Activated naive CD4-positive, alpha-beta T cell treated with anti-CD3 and anti-CD28 coated beads for 36 hours (primary cell): ENCODE measurements at regions of chr7 and their contacts with region 1.

Region 1: GRCh38 chr7:123748734-123749536 is at the start of gene WASL:
- DNase-seq: peak; percentile 89
- H3K4me3 Mint-ChIP-seq: peak within 1 kb of the TSS; percentile 95
- H3K27ac Mint-ChIP-seq: peak within 1 kb of the TSS; percentile 95
- H3K4me1 Mint-ChIP-seq: peaks cover 46% of the 10 kb centered on the region
- H3K27me3 Mint-ChIP-seq: no peaks in the 10 kb centered on the region
- total RNA-seq, gene WASL: 3.7 to 3.8 TPM

Region 2: DNA sequence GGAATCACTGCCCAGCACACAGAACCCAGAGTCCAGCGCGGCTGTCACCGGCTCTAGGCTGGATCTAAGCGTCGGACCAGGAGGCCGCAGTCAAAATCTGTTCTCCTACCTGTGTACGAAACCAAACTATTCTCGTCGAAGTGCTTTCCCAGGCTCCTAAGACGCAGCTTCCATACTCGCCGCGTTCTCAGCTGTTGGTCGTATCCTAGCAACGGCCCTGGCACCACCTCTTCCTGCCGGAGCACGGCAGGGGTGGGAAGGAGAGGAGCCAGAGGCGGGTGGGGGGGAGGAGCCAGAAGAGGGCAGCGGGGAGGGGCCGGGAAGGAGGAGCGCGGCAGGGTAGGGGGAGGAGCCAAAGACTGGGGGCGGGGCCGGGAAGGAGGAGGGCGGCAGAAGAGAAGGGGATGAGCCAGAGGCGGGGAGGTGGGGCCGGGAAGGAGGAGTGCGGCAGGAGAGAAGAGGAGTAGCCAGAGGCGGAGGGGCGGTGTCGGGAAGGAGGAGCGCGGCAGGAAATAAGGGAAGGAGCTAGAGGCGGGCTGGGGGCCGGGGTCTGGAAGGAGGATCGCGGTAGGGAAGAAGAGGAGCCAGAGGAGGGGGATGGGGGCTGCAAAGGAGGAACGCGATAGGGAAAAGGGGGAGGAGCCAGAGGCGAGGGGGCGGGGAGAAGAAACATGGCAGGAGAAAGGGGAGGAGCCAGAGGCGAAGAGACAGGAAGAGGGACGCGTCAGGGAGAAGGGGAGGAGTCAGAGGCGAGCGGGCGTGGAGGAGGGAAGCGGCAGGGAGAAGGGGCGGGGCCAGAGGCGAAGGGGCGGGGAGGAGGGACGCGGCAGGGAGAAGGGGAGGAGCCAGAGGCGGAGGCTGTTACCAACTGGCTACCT is 214.3 kb before region 1 on chr7 and contains the start of gene IQUB:
- CTCF ChIA-PET with region 1: no interaction called
- intact Hi-C with region 1: loop called (anchors 1 kb)
- DNase-seq: peak; percentile 99
- H3K4me3 Mint-ChIP-seq: peak within 1 kb of the TSS; percentile 92
- H3K27ac Mint-ChIP-seq: peak within 1 kb of the TSS; percentile 82
- H3K4me1 Mint-ChIP-seq: peaks cover 27% of the 10 kb centered on the region
- H3K27me3 Mint-ChIP-seq: peaks cover 18% of the 10 kb centered on the region
- total RNA-seq, gene IQUB: 0.07 TPM in 1 of 2 experiments, not detected in the other

Region 3: DNA sequence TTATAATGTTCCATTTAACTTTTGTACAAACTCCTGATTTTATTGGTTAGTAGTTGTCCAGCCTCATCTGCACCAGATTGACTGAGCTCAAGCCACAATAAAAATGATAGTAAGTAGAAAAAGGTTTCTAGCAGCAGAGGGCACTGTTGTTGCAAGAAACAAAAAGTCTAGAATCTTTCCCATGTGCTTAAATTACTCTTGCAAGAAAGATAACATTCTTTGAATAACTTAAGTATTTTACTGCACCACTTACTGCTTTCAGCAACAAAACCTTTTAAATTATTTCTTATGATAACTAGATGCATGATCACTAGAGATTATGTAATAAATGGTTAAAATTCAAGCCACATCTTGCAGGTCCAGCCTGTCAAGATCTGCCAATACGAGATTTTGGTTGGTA is 66.2 kb before region 1 on chr7:
- CTCF ChIA-PET with region 1: no interaction called
- intact Hi-C with region 1: loop called (anchors 2 kb)
- DNase-seq: peak; percentile 31
- H3K4me3 Mint-ChIP-seq: no peak overlapping the region
- H3K27ac Mint-ChIP-seq: no peak overlapping the region
- H3K4me1 Mint-ChIP-seq: no peaks in the 10 kb centered on the region
- H3K27me3 Mint-ChIP-seq: no peaks in the 10 kb centered on the region

Region 4: DNA sequence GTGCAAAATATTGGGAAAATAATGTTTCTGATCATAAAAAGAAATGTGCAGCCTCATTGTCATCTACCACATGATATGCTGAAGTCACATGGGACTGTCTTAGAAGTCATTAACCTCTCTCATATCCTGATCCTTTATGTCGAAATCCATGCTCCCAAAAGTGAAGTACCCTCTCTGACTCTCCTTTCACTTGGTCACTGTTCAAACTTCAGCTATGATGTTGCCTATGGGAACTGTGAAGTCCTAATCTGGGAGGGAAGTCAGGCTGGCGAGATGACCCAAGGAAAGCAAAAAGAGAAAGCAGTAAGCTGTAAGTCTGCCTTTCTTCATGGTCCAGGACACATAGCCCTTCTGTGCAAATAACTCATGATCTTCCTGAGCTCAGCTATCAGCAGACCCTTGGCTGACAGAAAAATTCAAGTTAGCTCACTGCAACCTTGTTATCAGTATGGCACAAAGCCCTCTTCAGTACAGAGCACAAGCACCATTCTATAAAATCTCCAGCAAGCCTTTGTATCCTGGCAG is 29.7 kb before region 1 on chr7:
- CTCF ChIA-PET with region 1: interaction called, 4 read pairs
- intact Hi-C with region 1: loop called (anchors 1 kb)
- DNase-seq: no peak
- H3K4me3 Mint-ChIP-seq: no peak overlapping the region
- H3K27ac Mint-ChIP-seq: no peak overlapping the region
- H3K4me1 Mint-ChIP-seq: peaks cover 54% of the 10 kb centered on the region
- H3K27me3 Mint-ChIP-seq: no peaks in the 10 kb centered on the region

Region 5: GRCh38 chr7:123738356-123738755 is 10.6 kb before region 1 on chr7:
- CTCF ChIA-PET with region 1: interaction called, 5 read pairs
- intact Hi-C with region 1: loop called (anchors 1 kb)
- DNase-seq: no peak
- H3K4me3 Mint-ChIP-seq: no peak overlapping the region
- H3K27ac Mint-ChIP-seq: no peak overlapping the region
- H3K4me1 Mint-ChIP-seq: peaks cover 42% of the 10 kb centered on the region
- H3K27me3 Mint-ChIP-seq: no peaks in the 10 kb centered on the region

Region 6: DNA sequence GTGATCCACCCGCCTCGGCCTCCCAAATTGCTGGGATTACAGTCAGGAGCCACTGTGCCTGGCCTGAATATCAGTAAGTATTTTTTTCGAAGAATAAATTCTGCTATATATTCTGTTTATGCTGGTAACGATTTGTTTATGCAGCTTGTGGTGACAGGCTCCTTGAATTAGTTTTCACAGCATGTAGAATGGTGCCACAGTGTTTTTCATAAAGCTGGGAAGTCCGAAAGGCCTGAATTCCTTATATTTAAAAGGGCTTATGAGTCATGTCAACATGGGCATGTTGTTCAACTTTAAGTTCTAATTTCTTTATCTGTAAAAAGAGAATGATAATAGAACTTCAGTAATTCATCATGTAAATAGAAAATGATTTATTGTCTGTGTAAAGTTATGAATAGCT is 42.1 kb after region 1 on chr7:
- CTCF ChIA-PET with region 1: no interaction called
- intact Hi-C with region 1: no loop called
- DNase-seq: no peak
- H3K4me3 Mint-ChIP-seq: no peak overlapping the region
- H3K27ac Mint-ChIP-seq: no peak overlapping the region
- H3K4me1 Mint-ChIP-seq: peaks cover 8% of the 10 kb centered on the region
- H3K27me3 Mint-ChIP-seq: no peaks in the 10 kb centered on the region

Region 7: DNA sequence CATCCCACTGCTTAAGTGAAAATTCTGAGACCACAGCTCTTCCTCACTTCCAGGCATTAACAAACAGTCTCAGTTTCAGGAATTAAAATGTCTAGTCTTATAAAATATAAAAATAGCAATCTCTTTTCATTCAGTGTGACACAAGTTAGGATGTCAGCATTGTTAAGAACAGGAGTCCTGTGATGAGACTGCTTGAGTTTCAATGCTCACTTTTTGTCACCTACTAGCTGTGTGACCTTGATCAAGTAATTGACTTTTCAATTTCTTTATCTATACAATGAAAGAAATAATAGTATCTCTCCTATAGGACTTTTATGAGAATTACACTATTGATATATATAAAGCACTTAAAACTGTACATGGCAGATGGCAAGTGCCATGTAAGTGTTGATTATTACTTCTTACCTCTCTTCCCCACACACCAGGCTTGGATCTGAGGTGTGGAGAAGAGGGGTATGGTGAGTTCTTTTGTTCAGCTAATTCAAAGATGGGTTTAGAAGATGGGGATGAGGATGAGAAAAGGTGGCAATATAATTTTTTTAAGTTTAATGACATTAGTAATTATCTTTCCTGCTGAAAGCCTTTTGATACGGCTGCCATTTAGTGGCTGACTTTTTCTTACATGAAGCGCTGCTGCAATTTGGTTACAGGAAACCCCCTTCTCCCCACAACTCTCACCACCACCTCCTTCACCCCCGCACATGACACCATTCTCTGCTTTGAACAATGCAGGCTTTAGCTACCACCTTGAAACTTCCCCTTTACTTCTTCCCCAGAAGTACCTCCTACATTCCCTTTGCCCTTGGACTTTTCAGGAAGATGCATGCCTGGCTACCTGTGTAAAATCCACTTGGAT is 75.2 kb after region 1 on chr7:
- CTCF ChIA-PET with region 1: no interaction called
- intact Hi-C with region 1: loop called (anchors 1 kb)
- DNase-seq: peak; percentile 85
- H3K4me3 Mint-ChIP-seq: no peak overlapping the region
- H3K27ac Mint-ChIP-seq: peak overlapping the region; percentile 76
- H3K4me1 Mint-ChIP-seq: peaks cover 21% of the 10 kb centered on the region
- H3K27me3 Mint-ChIP-seq: peaks cover 13% of the 10 kb centered on the region